Heart right ventricle (tissue), 16 donors: ENCODE measurements at regions of chr15 and their contacts with region 1.

Region 1: DNA sequence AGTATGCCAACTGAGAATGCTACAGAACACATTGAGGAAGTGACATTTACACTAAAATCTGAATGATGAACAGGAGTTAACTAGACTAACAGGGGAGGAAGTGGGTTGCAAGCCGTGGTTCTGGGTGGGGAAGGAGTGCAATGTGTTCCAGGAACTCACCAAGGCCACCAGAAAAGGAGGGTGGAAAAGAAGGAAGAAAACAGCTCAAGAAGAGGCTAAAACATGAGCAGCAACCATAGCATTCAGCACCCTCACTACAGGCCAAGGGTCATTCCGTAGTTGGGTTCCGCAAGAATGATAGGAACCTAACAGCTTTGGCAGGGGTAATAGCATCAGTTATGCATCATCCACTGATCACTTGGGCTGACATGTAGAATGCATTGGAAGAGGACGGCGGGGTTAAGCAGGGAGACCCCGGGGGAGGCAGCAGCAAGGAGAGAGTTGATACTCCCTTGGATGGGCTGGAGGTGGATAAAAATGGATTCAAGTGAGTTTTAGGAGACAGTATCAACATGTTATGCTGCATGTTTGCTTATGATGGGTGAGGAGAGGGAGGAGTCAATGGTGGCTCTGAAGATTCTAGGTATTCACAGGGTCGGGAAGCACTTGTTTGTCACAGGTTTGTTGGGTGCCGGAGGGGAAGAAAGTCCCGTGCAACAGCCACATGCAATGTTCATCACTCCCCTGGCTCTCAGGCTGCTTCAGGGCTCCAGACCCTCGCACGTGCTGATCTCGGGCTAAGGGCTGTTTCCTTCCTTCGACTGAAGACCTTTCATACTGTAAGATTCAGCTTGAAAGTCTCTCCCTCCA is 53.2 kb downstream of the LIPC start:
- DNase-seq: no peak
- ATAC-seq: peak in 1 of 8 donors; percentile 56
- H3K4me3 ChIP-seq: no peak overlapping the region
- H3K27ac ChIP-seq: peak overlapping the region in 1 of 10 donors; percentile 70
- H3K4me1 ChIP-seq: peaks cover 0 to 29% (median 4%) of the 10 kb centered on the region in 9 donors
- H3K27me3 ChIP-seq: no peaks in the 10 kb centered on the region
- CTCF ChIP-seq: no peak

Region 2: DNA sequence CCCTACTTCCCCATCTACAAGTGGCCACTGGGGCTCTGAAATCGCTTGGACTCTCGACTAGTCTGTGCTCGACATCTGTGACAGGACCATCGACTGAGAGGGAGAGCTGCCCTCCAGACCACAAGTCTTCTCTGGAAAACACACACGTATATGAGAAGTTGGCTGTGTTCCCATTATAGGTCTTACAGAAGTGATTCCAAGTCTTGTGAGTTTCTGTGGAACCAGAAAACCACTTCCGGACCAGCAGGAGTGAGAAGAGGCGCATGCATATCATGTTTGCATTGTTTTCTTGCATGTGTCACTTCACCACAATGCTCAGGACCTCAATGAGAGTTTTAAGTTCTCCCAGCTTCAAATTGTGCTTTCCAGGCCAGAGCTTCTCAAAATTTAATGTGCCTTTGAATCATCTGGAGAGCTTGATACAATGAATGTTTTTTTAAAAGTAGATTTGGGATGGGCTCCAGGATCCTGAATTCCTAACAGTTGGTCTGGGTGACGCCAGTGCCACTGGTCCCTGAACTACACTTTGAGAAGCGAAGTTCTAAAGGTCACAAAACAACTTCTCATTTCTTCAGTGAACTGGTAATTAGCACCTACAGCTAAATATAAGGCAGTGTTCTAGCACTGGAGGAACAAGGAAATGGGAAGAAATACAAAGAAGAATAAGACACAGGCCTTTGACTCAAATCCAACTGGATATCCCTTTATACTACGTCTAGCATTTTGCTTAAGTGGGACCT is 37.6 kb before region 1 on chr15:
- intact Hi-C with region 1: loop called in 1 of 10 experiments (anchors 5 kb)
- DNase-seq: no peak
- ATAC-seq: peak in 2 of 8 donors; percentile 21 to 22
- H3K4me3 ChIP-seq: no peak overlapping the region
- H3K27ac ChIP-seq: peak overlapping the region in 1 of 10 donors; percentile 12
- H3K4me1 ChIP-seq: peaks cover 0 to 16% (median 9%) of the 10 kb centered on the region in 9 donors
- H3K27me3 ChIP-seq: no peaks in the 10 kb centered on the region
- CTCF ChIP-seq: no peak